Mammary epithelial cell (primary cell): ENCODE measurements at regions of chr17 and their contacts with region 1.

Region 1: DNA sequence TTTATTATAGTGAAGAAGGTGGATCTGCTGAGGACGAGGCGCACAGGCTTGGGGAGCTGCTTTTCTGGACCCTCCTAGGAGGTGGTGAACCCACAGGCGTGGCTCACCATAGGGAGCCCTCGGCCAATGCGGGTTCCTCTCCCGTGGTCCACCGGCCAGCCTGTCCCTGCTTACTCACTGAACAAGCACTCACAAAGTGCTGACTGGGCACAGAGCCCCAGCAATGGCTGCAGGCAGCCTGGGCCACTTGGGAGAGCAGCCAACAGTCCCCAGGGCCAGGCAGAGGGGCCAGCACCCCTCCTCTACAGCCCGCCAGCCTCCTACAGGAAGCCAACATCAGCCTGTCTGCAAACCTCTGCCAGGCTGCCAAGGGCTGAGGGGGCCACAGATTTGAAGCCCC is 19.1 kb upstream of the NCBP3 start:
- DNase-seq: no peak
- H3K4me3 ChIP-seq: no peak overlapping the region
- H3K27ac ChIP-seq: no peak overlapping the region
- H3K4me1 ChIP-seq: no peaks in the 10 kb centered on the region
- H3K27me3 ChIP-seq: no peaks in the 10 kb centered on the region
- CTCF ChIP-seq: no peak

Region 2: DNA sequence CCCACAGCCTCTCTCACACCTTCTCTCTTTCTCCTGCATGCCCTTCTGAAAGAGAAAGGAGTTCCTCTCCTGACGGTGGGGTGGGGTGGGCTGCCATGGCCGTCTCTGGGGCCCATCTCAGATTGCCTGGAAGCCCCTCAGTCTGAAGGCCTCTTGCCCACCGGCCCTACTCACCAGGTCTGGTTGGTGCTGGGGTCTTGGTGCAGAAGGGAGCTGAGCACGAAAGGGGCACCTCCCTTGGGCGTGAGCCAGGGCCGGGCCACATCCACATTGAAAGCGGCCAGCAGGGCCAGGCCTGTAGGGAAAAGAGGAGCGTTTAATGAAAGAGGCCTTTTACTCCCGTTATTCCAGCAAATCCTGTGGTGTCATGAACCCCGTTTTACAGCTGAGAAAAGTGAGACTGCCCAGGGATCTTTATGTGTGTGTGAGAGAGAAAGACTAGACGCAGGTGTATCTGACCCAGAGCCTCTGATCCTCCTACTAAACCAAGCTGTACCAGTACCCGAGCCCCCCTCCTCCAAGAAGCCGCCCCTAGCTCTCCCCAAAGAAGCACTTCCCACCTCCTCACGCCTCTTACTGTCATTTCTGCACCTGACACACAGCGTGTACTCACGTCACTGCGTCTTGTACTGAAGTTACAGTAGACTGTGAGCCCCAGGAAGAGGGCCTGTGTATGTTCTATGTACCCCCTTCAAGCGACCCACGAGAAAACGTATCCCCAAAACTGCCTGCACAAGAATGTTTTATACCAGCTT is 87.6 kb before region 1 on chr17:
- CTCF ChIA-PET with region 1: no interaction called
- dilution Hi-C with region 1: no loop called
- in situ Hi-C with region 1: no loop called
- intact Hi-C with region 1: no loop called
- DNase-seq: no peak
- H3K4me3 ChIP-seq: no peak overlapping the region
- H3K27ac ChIP-seq: no peak overlapping the region
- H3K4me1 ChIP-seq: no peaks in the 10 kb centered on the region
- H3K27me3 ChIP-seq: no peaks in the 10 kb centered on the region
- CTCF ChIP-seq: no peak

Region 3: DNA sequence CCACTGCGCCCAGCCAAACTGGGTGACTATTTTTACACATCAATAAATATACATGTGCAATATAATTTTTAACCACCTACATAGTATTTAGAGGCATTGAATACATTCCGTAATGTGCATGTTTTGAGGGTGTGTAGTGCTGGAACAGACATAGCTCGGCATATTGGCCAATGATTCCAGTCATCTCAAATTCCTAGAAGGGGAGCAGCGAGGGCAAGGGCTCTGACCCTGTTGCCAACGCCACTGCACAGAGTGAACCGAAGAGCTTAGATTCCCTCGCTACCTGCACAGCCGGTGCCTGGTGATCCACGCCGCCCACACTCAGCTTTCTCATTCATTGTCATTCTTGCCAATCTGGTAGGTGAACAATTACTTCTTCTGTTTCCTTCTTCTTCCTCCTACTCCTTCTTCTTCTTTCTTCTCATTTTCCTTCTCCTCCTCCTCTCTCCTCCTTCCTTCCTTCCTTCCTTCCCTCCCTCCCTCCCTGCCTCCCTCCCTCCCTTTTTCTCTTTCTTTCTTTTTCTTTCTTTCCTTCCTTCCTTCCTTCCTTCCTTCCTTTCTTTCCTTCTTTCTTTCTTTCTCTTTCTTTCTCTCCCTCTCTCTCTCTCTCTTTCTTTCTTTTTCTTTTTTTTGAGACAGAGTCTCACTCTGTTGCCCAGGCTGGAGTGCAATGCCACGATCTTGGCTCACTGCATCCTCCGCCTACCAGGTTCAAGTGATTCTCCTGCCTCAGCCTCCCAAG is 125.4 kb after region 1 on chr17:
- CTCF ChIA-PET with region 1: no interaction called
- dilution Hi-C with region 1: no loop called
- in situ Hi-C with region 1: no loop called
- intact Hi-C with region 1: loop called (anchors 10 kb)
- DNase-seq: peak; percentile 68
- H3K4me3 ChIP-seq: no peak overlapping the region
- H3K27ac ChIP-seq: no peak overlapping the region
- H3K4me1 ChIP-seq: no peaks in the 10 kb centered on the region
- H3K27me3 ChIP-seq: no peaks in the 10 kb centered on the region
- CTCF ChIP-seq: no peak

Region 4: DNA sequence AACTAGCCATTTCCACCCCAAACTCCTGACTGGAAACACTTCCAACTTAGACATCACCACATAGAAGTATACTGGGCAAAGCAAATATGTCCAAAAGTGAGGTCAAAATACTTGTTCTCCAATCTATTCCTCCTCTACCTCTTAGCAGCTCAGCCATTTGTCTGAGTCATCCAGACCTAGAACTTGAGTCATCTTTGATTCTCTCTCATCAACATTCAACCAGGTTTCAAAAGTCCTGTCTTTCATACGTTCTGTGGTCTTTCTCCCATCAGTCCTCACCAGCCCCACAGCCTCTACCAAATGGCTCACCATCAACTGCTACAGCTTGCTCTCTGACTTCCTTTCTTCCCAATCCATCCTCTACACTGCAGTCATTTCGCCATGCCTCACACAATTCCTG is 391.8 kb after region 1 on chr17:
- CTCF ChIA-PET with region 1: no interaction called
- dilution Hi-C with region 1: no loop called
- in situ Hi-C with region 1: no loop called
- intact Hi-C with region 1: no loop called
- DNase-seq: peak; percentile 66
- H3K4me3 ChIP-seq: no peak overlapping the region
- H3K27ac ChIP-seq: no peak overlapping the region
- H3K4me1 ChIP-seq: peaks cover 10% of the 10 kb centered on the region
- H3K27me3 ChIP-seq: no peaks in the 10 kb centered on the region
- CTCF ChIP-seq: no peak